Activated naive CD4-positive, alpha-beta T cell treated with anti-CD3 and anti-CD28 coated beads for 36 hours (primary cell): ENCODE measurements at regions of chr16 and their contacts with region 1.

Region 1: DNA sequence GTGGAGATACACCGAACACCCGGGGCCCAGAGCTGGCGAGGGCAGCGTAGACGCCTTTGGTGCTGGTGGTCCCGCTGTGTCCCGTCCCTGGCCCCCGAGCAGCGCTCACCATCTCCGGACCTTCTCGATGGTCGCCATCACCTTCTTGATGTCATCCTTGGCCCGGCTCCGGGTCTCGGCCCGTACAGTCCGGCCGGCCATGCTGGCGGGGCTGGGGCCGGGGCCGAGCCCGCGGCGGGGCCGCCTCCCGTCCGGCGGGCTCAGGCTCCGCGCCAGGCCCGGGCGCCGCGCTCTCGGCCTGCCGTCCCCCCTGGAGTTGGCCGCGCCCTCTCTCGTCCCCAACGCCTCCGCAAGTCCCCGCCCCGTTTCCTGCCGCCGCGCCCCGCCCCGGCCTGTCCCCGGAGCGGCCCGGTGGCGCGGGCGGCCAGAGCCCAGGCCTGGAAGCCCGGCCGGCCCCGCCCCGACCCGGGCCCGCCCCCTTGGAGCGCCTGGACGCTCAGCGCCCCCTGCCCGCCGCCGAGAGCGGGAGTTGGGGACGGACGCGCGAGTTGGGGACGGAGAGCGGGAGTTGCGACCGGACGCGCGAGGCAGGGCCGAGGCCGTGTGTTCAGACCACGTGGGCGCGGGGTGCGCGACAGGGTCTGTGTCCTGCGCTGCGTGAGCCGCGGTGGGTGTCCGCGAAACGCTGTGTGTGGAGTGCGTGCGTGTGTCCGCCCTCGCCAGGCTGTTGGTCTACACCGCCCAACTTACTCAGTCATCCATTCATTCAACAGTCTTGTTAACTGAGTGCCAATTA is at the start of gene BCL7C:
- DNase-seq: peak; percentile 90
- H3K4me3 Mint-ChIP-seq: peak within 1 kb of the TSS; percentile 84
- H3K27ac Mint-ChIP-seq: peak within 1 kb of the TSS; percentile 78
- H3K4me1 Mint-ChIP-seq: peaks cover 39% of the 10 kb centered on the region
- H3K27me3 Mint-ChIP-seq: no peaks in the 10 kb centered on the region
- total RNA-seq, gene BCL7C: 18.1 to 18.6 TPM

Region 2: DNA sequence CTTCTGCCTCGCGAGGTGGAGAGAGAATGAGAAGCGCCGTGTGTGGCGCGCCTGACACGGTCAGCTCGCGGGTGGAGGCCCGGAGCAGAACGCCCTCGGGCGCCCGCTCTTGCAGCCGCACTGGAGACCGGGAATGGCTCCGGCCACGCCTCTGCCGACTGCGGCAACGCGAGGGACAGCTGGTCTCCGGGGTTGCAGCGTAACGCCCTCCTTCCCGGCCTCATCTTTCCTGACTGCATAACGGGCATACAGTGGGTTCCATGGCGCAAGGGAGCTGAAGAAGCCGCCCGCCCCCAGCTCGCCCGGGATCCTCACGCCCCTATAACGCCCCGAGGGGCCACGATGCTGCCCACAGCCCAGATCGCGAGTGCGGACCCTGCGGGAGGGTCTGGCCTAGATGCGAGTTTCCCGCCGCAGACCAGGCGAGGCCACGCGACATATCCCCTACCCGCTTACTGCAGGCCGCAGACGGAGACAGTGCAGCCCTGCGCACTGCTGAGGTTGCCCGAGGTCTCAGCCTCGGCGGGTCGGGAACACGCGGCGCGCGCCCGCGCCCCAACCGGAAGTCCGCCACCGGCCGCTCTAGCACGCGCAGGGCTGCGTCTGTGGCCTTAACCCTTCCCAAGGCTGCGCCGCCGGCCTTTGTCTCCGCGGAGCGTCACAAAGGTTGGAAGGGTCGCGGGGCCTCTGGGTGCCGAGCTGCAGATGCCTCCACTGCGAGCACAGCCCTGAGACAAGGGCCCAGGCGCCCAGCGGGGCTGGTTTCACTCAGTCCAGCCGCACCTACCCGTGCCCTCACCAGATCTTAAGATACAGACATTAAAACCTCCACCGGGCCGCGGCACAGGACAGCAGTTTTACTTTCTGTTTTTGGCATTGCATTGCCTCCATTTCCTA is 18.9 kb before region 1 on chr16:
- CTCF ChIA-PET with region 1: interaction called, 4 read pairs
- intact Hi-C with region 1: loop called (anchors 1 kb)
- DNase-seq: peak; percentile 90
- H3K4me3 Mint-ChIP-seq: peak overlapping the region; percentile 92
- H3K27ac Mint-ChIP-seq: peak overlapping the region; percentile 96
- H3K4me1 Mint-ChIP-seq: peaks cover 40% of the 10 kb centered on the region
- H3K27me3 Mint-ChIP-seq: no peaks in the 10 kb centered on the region

Region 3: GRCh38 chr16:30948667-30949649 is 55.0 kb after region 1 on chr16 and contains the start of gene ORAI3:
- CTCF ChIA-PET with region 1: no interaction called
- intact Hi-C with region 1: loop called (anchors 2 kb)
- DNase-seq: peak; percentile 64
- H3K4me3 Mint-ChIP-seq: peak within 1 kb of the TSS; percentile 80
- H3K27ac Mint-ChIP-seq: peak within 1 kb of the TSS; percentile 65
- H3K4me1 Mint-ChIP-seq: peaks cover 16% of the 10 kb centered on the region
- H3K27me3 Mint-ChIP-seq: no peaks in the 10 kb centered on the region
- total RNA-seq, gene ORAI3: 4.2 to 4.7 TPM